Right cardiac atrium (tissue), 5 donors: ENCODE measurements at regions of chr13 and their contacts with region 1.

Region 1: DNA sequence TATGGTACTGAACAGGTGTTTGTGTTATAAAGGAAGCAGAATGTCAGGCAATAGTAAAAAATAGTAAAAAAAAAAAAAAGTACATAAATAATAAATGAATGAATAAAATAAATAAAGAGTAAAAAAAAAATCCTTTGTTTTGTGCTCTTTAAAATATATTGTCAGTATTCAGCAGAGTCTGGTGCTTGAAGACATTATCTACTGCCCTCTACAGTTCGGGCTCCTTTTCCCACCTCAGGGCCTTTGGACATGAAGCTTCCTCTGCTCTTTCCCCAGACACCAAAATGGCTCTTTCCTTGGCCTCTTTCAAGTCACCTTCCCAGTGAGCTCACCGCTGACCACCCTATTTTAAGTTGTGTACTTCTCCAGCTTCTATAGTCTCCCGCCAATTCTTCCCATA is 137.5 kb downstream of the TNFRSF19 start:
- DNase-seq: no peak
- ATAC-seq: no peak
- H3K4me3 ChIP-seq: no peak overlapping the region
- H3K27ac ChIP-seq: no peak overlapping the region
- H3K4me1 ChIP-seq: peaks cover 1% of the 10 kb centered on the region
- H3K27me3 ChIP-seq: no peaks in the 10 kb centered on the region

Region 2: GRCh38 chr13:23579072-23579895 is 128.4 kb before region 1 on chr13:
- intact Hi-C with region 1: loop called in 1 of 4 experiments (anchors 10 kb)
- DNase-seq: peak; percentile 93 to 98 (median 97)
- ATAC-seq: peak; percentile 99
- H3K4me3 ChIP-seq: peak overlapping the region; percentile 64
- H3K27ac ChIP-seq: peak overlapping the region; percentile 24
- H3K4me1 ChIP-seq: no peaks in the 10 kb centered on the region
- H3K27me3 ChIP-seq: no peaks in the 10 kb centered on the region

Region 3: GRCh38 chr13:23763318-23763717 is 55.6 kb after region 1 on chr13:
- intact Hi-C with region 1: no loop called
- DNase-seq: no peak
- ATAC-seq: no peak
- H3K4me3 ChIP-seq: no peak overlapping the region
- H3K27ac ChIP-seq: no peak overlapping the region
- H3K4me1 ChIP-seq: peaks cover 8% of the 10 kb centered on the region
- H3K27me3 ChIP-seq: no peaks in the 10 kb centered on the region